Naive thymus-derived CD4-positive, alpha-beta T cell (primary cell): ENCODE measurements at regions of chr12 and their contacts with region 1.

Region 1: DNA sequence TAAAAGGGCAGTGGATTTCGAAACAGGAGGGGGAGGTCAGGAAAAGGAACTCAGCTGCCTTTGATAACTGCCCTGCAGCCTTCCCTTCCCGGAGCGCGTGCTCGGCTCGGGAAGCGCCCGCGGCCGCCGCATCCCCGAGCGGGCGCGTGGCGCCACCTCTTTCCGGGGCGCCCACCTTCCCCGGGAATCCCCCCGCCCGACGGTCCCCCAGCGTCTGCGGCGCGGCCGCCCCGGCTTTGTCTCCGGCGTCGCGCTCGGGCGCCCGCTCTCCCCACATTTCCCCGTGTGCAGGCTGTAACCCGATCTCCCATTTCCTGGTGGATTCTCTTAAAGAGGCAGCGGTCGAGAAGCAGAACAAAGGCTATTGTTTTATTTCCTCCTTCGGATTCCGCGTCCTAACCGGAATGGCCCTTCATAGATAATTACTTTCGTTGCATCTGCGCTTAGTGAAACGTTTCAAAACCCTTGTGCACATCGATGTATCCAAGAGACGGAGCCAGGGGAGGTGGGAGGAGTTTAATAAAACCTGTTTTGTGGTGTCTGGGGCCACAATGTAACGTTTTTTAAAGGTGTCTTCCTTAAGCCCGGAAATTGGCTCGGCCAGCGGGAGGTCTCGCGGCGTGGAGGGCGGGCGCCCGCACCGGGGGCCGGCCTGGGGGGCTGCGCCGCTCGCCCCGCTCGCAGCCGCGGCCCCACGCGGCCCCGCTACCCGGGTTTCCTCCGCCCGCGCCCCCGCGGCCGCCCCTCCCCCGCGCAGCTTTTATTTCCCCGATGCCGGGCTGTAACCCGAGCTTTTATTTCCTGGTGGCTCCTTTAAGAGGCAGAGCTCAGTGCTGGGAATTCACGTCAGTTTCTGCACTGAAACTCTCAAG is at the start of gene ETV6:
- DNase-seq: peak; percentile 51 to 85 (median 79)
- ATAC-seq: peak; percentile 73
- H3K4me3 ChIP-seq: peak within 1 kb of the TSS; percentile 92
- H3K4me3 Mint-ChIP-seq: peak within 1 kb of the TSS; percentile 82 to 99 (median 98)
- H3K27ac ChIP-seq: peak within 1 kb of the TSS; percentile 90
- H3K27ac Mint-ChIP-seq: peak within 1 kb of the TSS; percentile 91 to 99 (median 97)
- H3K4me1 ChIP-seq: peaks cover 6 to 22% of the 10 kb centered on the region in 2 donors
- H3K4me1 Mint-ChIP-seq: peaks cover 24 to 49% (median 36%) of the 10 kb centered on the region in 7 donors
- H3K27me3 ChIP-seq: no peaks in the 10 kb centered on the region
- H3K27me3 Mint-ChIP-seq: no peaks in the 10 kb centered on the region
- total RNA-seq, gene ETV6: 24.2 to 70.3 (median 38.0) TPM

Region 2: DNA sequence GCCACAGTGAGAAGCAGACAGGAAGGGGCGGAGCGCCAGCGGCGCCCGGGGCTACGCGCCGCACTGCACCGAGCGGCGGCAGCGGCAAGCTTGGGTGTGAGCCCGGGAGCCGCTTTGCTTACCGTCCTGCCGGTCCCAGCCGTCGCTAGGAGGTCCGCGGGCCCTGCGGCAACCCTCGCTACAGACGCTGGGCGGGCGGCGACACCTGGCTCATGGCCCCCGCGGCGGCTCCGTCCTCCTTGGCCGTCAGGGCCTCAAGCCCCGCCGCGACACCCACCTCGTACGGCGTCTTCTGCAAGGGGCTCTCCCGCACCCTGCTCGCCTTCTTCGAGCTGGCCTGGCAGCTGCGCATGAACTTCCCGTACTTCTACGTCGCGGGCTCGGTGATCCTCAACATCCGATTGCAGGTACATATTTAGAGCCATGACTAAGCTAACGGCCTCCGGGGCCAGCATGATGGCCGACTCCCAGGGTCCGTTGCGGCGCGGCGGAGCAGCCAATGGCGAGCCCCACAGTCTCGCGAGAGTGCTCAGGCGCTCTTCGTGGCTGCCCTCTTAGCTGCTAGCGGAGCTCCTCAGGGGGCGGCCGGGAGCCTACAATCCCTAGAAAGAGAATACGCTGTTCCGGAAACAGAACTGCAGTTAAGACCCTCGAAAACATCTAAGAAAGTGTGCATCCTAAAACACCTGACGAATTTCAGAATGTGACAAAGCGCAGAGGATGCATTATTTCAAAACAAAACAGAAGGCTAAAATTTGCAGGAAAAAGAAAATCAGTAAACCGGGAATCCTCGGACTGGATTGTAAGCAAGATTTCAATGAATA is 477.7 kb before region 1 on chr12 and contains the start of gene SMIM10L1:
- CTCF ChIA-PET with region 1: no interaction called
- POLR2A ChIA-PET with region 1: no interaction called
- intact Hi-C with region 1: loop called in 1 of 2 experiments (anchors 2 kb)
- DNase-seq: peak; percentile 77 to 88 (median 83)
- ATAC-seq: peak; percentile 97
- H3K4me3 ChIP-seq: peak within 1 kb of the TSS; percentile 74
- H3K4me3 Mint-ChIP-seq: peak within 1 kb of the TSS; percentile 94 to 100 (median 98)
- H3K27ac ChIP-seq: peak within 1 kb of the TSS; percentile 72
- H3K27ac Mint-ChIP-seq: peak within 1 kb of the TSS; percentile 97 to 100 (median 99)
- H3K4me1 ChIP-seq: peaks cover 30 to 36% of the 10 kb centered on the region in 2 donors
- H3K4me1 Mint-ChIP-seq: peaks cover 53 to 82% (median 72%) of the 10 kb centered on the region in 7 donors
- H3K27me3 ChIP-seq: no peaks in the 10 kb centered on the region
- H3K27me3 Mint-ChIP-seq: no peaks in the 10 kb centered on the region
- total RNA-seq, gene SMIM10L1: 7.8 to 12.9 (median 8.5) TPM

Region 3: GRCh38 chr12:11673666-11674461 is 24.8 kb after region 1 on chr12:
- CTCF ChIA-PET with region 1: no interaction called
- POLR2A ChIA-PET with region 1: no interaction called
- intact Hi-C with region 1: loop called in 1 of 2 experiments (anchors 2 kb)
- DNase-seq: no peak
- ATAC-seq: no peak
- H3K4me3 ChIP-seq: no peak overlapping the region
- H3K4me3 Mint-ChIP-seq: peak overlapping the region in 2 of 10 donors; percentile 0 to 24
- H3K27ac ChIP-seq: no peak overlapping the region
- H3K27ac Mint-ChIP-seq: peak overlapping the region in 3 of 9 donors; percentile 17 to 54 (median 28)
- H3K4me1 ChIP-seq: peaks cover 0 to 5% of the 10 kb centered on the region in 2 donors
- H3K4me1 Mint-ChIP-seq: peaks cover 55 to 92% (median 80%) of the 10 kb centered on the region in 7 donors
- H3K27me3 ChIP-seq: no peaks in the 10 kb centered on the region
- H3K27me3 Mint-ChIP-seq: no peaks in the 10 kb centered on the region

Region 4: GRCh38 chr12:11836282-11837151 is 187.4 kb after region 1 on chr12:
- CTCF ChIA-PET with region 1: no interaction called
- POLR2A ChIA-PET with region 1: no interaction called
- intact Hi-C with region 1: loop called in 1 of 2 experiments (anchors 5 kb)
- DNase-seq: peak in 1 of 9 donors; percentile 76
- ATAC-seq: peak; percentile 79
- H3K4me3 ChIP-seq: no peak overlapping the region
- H3K4me3 Mint-ChIP-seq: peak overlapping the region in 1 of 10 donors; percentile 79
- H3K27ac ChIP-seq: no peak overlapping the region
- H3K27ac Mint-ChIP-seq: peak overlapping the region in 3 of 9 donors; percentile 12 to 81 (median 61)
- H3K4me1 ChIP-seq: no peaks in the 10 kb centered on the region
- H3K4me1 Mint-ChIP-seq: peaks cover 8 to 54% (median 27%) of the 10 kb centered on the region in 7 donors
- H3K27me3 ChIP-seq: no peaks in the 10 kb centered on the region
- H3K27me3 Mint-ChIP-seq: no peaks in the 10 kb centered on the region

Region 5: GRCh38 chr12:12070674-12071656 is 421.9 kb after region 1 on chr12 and contains the start of gene BCL2L14:
- CTCF ChIA-PET with region 1: no interaction called
- POLR2A ChIA-PET with region 1: no interaction called
- intact Hi-C with region 1: loop called in 1 of 2 experiments (anchors 5 kb)
- DNase-seq: peak in 6 of 9 donors; percentile 11 to 34 (median 24)
- ATAC-seq: peak; percentile 40
- H3K4me3 ChIP-seq: peak within 1 kb of the TSS; percentile 47
- H3K4me3 Mint-ChIP-seq: peak within 1 kb of the TSS; percentile 65 to 92 (median 79)
- H3K27ac ChIP-seq: peak within 1 kb of the TSS; percentile 58
- H3K27ac Mint-ChIP-seq: peak within 1 kb of the TSS; percentile 52 to 96 (median 90)
- H3K4me1 ChIP-seq: peaks cover 0 to 5% of the 10 kb centered on the region in 2 donors
- H3K4me1 Mint-ChIP-seq: peaks cover 13 to 37% (median 24%) of the 10 kb centered on the region in 7 donors
- H3K27me3 ChIP-seq: no peaks in the 10 kb centered on the region
- H3K27me3 Mint-ChIP-seq: peaks cover 0 to 8% (median 0%) of the 10 kb centered on the region in 5 donors
- total RNA-seq, gene BCL2L14: 0.92 to 7.6 (median 1.4) TPM

Region 6: DNA sequence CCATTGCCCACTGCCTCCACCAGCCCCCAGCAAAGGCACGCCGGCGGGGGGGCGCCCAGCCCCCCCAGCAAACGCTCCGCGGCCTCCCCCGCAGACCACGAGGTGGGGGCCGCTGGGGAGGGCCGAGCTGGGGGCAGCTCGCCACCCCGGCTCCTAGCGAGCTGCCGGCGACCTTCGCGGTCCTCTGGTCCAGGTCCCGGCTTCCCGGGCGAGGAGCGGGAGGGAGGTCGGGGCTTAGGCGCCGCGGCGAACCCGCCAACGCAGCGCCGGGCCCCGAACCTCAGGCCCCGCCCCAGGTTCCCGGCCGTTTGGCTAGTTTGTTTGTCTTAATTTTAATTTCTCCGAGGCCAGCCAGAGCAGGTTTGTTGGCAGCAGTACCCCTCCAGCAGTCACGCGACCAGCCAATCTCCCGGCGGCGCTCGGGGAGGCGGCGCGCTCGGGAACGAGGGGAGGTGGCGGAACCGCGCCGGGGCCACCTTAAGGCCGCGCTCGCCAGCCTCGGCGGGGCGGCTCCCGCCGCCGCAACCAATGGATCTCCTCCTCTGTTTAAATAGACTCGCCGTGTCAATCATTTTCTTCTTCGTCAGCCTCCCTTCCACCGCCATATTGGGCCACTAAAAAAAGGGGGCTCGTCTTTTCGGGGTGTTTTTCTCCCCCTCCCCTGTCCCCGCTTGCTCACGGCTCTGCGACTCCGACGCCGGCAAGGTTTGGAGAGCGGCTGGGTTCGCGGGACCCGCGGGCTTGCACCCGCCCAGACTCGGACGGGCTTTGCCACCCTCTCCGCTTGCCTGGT is 1067.9 kb after region 1 on chr12 and contains the start of gene CDKN1B:
- CTCF ChIA-PET with region 1: no interaction called
- POLR2A ChIA-PET with region 1: no interaction called
- intact Hi-C with region 1: loop called in 1 of 2 experiments (anchors 5 kb)
- DNase-seq: peak; percentile 68 to 91 (median 87)
- ATAC-seq: peak; percentile 77
- H3K4me3 ChIP-seq: peak within 1 kb of the TSS; percentile 94
- H3K4me3 Mint-ChIP-seq: peak within 1 kb of the TSS; percentile 87 to 100 (median 98)
- H3K27ac ChIP-seq: peak within 1 kb of the TSS; percentile 99
- H3K27ac Mint-ChIP-seq: peak within 1 kb of the TSS; percentile 97 to 99 (median 99)
- H3K4me1 ChIP-seq: peaks cover 24 to 39% of the 10 kb centered on the region in 2 donors
- H3K4me1 Mint-ChIP-seq: peaks cover 43 to 66% (median 55%) of the 10 kb centered on the region in 7 donors
- H3K27me3 ChIP-seq: no peaks in the 10 kb centered on the region
- H3K27me3 Mint-ChIP-seq: no peaks in the 10 kb centered on the region
- total RNA-seq, gene CDKN1B: 105 to 205 (median 191) TPM